Common myeloid progenitor, CD34-positive (primary cell): ENCODE measurements at regions of chr17 and their contacts with region 1.

Region 1: GRCh38 chr17:41322094-41322902 is 6.8 kb upstream of the KRTAP17-1 start:
- DNase-seq: peak; percentile 40 to 74 (median 68)
- H3K4me3 ChIP-seq: no peak overlapping the region
- H3K27ac ChIP-seq: no peak overlapping the region
- H3K4me1 ChIP-seq: peaks cover 0 to 7% (median 0%) of the 10 kb centered on the region in 4 experiments
- H3K27me3 ChIP-seq: no peaks in the 10 kb centered on the region

Region 2: DNA sequence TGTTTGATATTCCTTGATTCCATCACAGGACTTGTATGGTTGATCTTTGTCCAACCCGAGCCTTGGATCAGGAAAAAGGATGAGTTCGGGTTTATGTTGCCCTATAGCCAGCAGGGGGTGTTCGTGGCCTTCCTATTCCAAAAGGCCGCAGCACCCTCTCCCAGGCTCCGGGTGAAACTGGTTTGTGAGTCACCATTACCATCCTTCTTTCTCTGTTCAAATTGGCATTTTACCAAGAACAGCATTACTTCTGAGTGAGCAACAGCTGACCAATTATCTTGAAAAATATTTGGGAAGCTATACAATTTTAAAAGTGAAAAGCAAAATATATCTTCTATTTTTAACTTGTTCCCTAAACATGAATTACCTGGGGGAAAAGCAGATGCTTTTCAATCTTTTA is 412.9 kb before region 1 on chr17:
- CTCF ChIA-PET with region 1: interaction called, 11 read pairs
- POLR2A ChIA-PET with region 1: no interaction called
- DNase-seq: peak; percentile 76 to 81 (median 77)
- H3K4me3 ChIP-seq: no peak overlapping the region
- H3K27ac ChIP-seq: no peak overlapping the region
- H3K4me1 ChIP-seq: peaks cover 0 to 6% (median 0%) of the 10 kb centered on the region in 4 experiments
- H3K27me3 ChIP-seq: peaks cover 0 to 19% (median 4%) of the 10 kb centered on the region in 5 experiments

Region 3: GRCh38 chr17:41301916-41302901 is 20.1 kb before region 1 on chr17 and contains the start of gene KRTAP29-1:
- CTCF ChIA-PET with region 1: interaction called, 10 read pairs
- POLR2A ChIA-PET with region 1: no interaction called
- DNase-seq: peak in 2 of 3 donors; percentile 49 to 53
- H3K4me3 ChIP-seq: no peak within 1 kb of the TSS
- H3K27ac ChIP-seq: no peak within 1 kb of the TSS
- H3K4me1 ChIP-seq: peaks cover 2 to 25% (median 3%) of the 10 kb centered on the region in 4 experiments
- H3K27me3 ChIP-seq: no peaks in the 10 kb centered on the region

Region 4: DNA sequence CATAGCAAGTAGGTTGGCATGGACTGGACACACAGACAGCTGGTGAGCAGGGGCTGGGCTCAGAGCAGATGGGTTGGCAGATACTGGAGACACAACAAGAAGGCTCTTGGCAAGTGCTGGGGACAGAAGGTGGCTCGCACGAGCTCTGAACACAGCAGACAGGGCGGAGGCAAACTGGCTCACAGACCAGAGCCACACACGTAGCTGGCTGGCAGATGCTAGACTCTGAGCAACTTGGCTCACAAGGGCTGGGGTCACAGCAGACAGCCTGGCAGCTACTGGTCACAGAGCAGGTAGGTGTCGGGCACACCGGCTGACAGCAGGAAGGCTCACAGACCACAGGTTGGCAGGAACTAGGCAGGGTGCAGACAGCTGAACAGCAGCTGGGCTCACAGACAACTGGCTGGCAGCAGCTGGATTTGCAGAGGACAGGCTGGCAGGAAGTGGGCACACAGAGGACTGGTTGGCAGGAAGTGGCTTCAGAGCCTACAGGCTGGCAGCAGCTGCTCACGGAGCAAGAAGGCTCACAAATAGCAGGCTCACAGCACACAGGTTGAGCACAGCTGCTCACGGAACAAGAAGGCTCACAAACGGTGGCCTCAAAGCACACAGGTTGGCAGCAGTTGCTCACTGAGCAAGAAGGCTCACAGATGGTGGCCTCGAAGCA is 13.9 kb before region 1 on chr17:
- CTCF ChIA-PET with region 1: interaction called, 14 read pairs
- POLR2A ChIA-PET with region 1: no interaction called
- DNase-seq: peak; percentile 88 to 100 (median 98)
- H3K4me3 ChIP-seq: peak overlapping the region in 3 of 7 experiments; percentile 19 to 56 (median 40)
- H3K27ac ChIP-seq: peak overlapping the region; percentile 33 to 74
- H3K4me1 ChIP-seq: peaks cover 9 to 34% (median 23%) of the 10 kb centered on the region in 4 experiments
- H3K27me3 ChIP-seq: no peaks in the 10 kb centered on the region

Region 5: GRCh38 chr17:41334425-41334824 is 12.1 kb after region 1 on chr17:
- CTCF ChIA-PET with region 1: interaction called, 22 read pairs
- POLR2A ChIA-PET with region 1: no interaction called
- DNase-seq: peak in 2 of 3 donors; percentile 25 to 30
- H3K4me3 ChIP-seq: no peak overlapping the region
- H3K27ac ChIP-seq: no peak overlapping the region
- H3K4me1 ChIP-seq: peaks cover 0 to 2% (median 0%) of the 10 kb centered on the region in 4 experiments
- H3K27me3 ChIP-seq: no peaks in the 10 kb centered on the region